ENCODE measurements at regions of chr13 and their contacts with region 1.

Region 1: DNA sequence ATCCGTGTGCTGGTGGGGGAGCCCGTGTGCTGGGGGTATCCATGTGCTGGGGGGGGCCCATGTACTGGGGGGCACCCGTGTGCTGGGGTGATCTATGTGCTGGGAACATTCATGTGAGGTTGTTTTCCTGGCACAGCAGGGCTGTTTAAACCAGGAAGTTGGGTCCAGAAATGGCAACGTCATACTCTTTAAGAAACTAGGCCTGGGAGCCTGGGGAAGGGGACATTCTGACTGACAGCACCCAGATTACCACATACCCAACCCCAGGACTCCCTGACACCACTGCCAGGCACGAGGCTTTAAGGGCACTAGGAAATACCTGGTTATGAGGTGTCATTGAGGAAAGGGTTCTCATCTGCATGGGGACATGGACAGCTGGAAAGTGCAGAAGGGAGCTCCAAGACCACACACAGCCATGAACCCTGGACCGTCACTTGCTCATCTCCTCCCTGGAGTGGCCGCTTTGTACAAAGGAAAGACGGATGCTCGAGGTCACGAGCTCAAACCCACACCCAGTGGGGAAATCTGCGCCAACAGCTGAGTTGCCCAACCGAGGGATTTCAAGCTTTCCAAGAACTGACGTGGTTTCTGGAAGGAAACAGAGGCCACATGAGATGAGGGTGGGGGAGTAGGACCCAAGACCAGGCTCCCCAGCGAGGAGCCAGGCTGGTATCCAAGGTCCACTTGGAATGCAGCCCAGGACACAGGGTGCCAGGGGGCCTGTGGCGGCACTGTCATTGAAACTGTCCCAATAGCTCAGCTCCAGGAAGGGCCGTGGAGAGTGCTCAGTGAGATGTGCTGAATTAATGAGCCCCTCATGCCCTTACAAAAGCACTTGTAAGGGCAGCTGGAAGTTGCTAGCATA is 40.9 kb downstream of the RAB20 start:
- DNase-seq: peak; percentile 90
- ATAC-seq: peak; percentile 90

Region 2: DNA sequence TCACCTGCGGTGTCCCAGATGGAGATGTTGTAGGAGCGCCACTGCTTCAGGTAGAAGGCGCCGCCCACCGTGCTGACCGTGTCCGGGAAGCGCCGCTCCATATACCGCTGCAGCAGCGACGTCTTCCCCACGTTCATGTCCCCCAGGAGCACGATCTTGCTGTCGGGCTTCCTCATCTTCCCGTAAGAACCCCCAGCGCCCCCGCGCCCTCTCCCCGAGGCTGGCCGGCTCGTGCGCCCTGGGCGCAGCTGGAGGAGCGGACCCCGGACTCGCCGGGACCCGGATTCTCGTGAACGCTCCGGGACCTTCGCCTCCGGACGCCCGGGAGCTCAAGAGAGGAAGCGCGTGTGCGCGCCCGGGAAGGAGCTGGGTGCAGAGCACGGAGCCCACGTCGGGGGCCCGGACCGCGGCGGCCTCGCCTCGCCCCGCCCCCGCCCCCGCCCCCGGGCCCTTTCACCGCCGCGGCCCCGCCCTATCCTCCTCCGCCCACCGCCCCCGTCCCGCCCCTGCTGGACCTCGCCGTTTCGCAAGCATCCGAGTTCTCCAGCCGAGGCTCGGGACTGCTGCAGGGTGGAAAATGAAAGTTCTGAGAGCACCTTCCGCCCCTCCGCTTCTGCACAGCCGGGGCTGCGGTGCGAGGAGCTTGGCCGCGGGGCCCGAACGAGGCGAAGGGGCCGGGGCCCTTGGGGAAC is 40.8 kb after region 1 on chr13 and contains the start of gene RAB20:
- intact Hi-C with region 1: loop called (anchors 5 kb)
- DNase-seq: peak; percentile 94
- ATAC-seq: peak; percentile 91
- total RNA-seq, gene RAB20: 23.8 TPM